Activated CD8-positive, alpha-beta T cell treated with anti-CD3 and anti-CD28 coated beads for 36 hours (primary cell): ENCODE measurements at regions of chr2 and their contacts with region 1.

Region 1: DNA sequence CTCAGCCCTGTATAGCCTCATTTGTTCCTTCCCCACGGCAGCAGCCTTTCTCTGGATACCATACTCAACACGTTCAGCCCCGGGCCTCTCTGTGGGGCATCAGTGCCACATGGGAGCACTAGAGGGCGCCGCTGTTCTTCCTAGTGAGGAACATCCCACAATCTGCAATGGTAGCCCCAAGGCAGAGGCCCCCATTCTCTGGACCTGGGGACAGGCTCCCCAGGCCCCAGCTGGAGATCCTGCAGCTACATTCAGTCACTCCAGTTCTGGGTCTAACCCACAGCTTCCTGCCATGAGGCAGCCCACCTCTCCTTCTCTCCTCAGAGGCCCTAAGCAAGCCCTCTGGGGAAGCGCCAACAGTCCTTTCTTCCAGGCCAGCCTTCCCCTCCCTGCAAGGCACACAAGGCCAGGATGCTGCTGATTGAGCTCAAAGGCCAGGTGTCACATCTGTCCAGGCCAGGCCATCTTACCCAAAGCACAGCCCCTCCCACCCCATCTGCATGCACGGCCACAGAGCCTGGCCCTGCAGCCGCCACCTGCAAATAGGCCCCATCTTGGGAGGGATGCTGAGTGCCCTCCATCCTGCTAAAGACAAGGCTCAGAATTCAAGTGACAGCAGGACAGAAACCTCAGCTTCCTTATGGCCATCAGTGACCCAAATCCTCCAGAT is 14.3 kb upstream of the SFXN5 start:
- DNase-seq: peak; percentile 93
- ATAC-seq: peak; percentile 99
- H3K4me3 Mint-ChIP-seq: no peak overlapping the region
- H3K27ac Mint-ChIP-seq: no peak overlapping the region
- H3K4me1 Mint-ChIP-seq: no peaks in the 10 kb centered on the region
- H3K27me3 Mint-ChIP-seq: no peaks in the 10 kb centered on the region
- CTCF ChIP-seq: peak; percentile 92

Region 2: GRCh38 chr2:72993147-72993932 is 92.5 kb before region 1 on chr2:
- CTCF ChIA-PET with region 1: interaction called, 11 read pairs
- POLR2A ChIA-PET with region 1: no interaction called
- intact Hi-C with region 1: no loop called
- DNase-seq: peak; percentile 51
- ATAC-seq: peak; percentile 79
- H3K4me3 Mint-ChIP-seq: no peak overlapping the region
- H3K27ac Mint-ChIP-seq: no peak overlapping the region
- H3K4me1 Mint-ChIP-seq: no peaks in the 10 kb centered on the region
- H3K27me3 Mint-ChIP-seq: no peaks in the 10 kb centered on the region
- CTCF ChIP-seq: peak; percentile 81

Region 3: DNA sequence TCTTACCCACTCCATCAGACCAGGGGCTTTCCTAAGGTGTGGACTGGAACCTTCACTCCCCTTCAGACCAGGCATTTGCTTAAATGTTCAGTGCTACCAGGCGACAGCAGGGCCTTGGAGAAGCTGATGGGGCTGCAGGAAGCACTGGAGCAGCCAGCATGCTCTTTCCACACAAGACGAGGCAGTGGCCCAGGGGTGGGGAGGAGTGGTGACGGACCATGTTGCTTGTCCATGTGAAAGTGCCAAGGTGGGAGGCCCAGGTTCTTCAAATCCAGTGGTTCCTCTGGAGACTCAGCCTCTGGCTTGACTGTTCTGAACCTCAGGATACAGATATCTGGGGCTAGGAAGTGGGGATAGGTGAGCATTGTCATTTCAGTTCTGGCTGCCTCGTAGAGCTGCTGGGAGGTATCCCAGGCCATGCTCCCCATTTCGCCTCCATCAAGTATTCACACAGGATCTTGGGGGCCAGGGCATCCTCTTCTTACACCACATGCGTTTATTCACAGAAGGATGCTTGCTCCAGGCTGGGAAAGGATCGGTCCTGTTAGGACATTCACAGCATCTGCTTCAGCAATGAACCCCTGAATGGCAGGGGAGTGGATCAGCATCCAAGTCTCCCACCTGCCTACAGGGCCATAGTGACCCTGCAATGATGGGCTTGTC is 76.5 kb before region 1 on chr2:
- CTCF ChIA-PET with region 1: no interaction called
- POLR2A ChIA-PET with region 1: no interaction called
- intact Hi-C with region 1: no loop called
- DNase-seq: no peak
- ATAC-seq: no peak
- H3K4me3 Mint-ChIP-seq: no peak overlapping the region
- H3K27ac Mint-ChIP-seq: no peak overlapping the region
- H3K4me1 Mint-ChIP-seq: no peaks in the 10 kb centered on the region
- H3K27me3 Mint-ChIP-seq: no peaks in the 10 kb centered on the region
- CTCF ChIP-seq: no peak

Region 4: GRCh38 chr2:73071360-73072133 is 14.3 kb before region 1 on chr2 and contains the start of gene SFXN5:
- CTCF ChIA-PET with region 1: interaction called, 20 read pairs
- POLR2A ChIA-PET with region 1: interaction called, 3 read pairs
- intact Hi-C with region 1: no loop called
- DNase-seq: peak; percentile 97
- ATAC-seq: peak; percentile 90
- H3K4me3 Mint-ChIP-seq: peak within 1 kb of the TSS; percentile 82
- H3K27ac Mint-ChIP-seq: peak within 1 kb of the TSS; percentile 94
- H3K4me1 Mint-ChIP-seq: peaks cover 25% of the 10 kb centered on the region
- H3K27me3 Mint-ChIP-seq: no peaks in the 10 kb centered on the region
- CTCF ChIP-seq: no peak
- total RNA-seq, gene SFXN5: 7.4 to 9.6 TPM

Region 5: GRCh38 chr2:73112913-73113633 is 27.2 kb after region 1 on chr2 and contains the start of gene RAB11FIP5:
- CTCF ChIA-PET with region 1: interaction called, 16 read pairs
- POLR2A ChIA-PET with region 1: interaction called, 3 read pairs
- intact Hi-C with region 1: no loop called
- DNase-seq: peak; percentile 75
- ATAC-seq: peak; percentile 83
- H3K4me3 Mint-ChIP-seq: peak within 1 kb of the TSS; percentile 81
- H3K27ac Mint-ChIP-seq: peak within 1 kb of the TSS; percentile 68
- H3K4me1 Mint-ChIP-seq: peaks cover 18% of the 10 kb centered on the region
- H3K27me3 Mint-ChIP-seq: peaks cover 7% of the 10 kb centered on the region
- CTCF ChIP-seq: no peak
- total RNA-seq, gene RAB11FIP5: 9.0 to 9.7 TPM

Region 6: GRCh38 chr2:73156539-73157124 is 70.8 kb after region 1 on chr2:
- CTCF ChIA-PET with region 1: interaction called, 90 read pairs
- POLR2A ChIA-PET with region 1: no interaction called
- intact Hi-C with region 1: no loop called
- DNase-seq: peak; percentile 68
- ATAC-seq: peak; percentile 91
- H3K4me3 Mint-ChIP-seq: no peak overlapping the region
- H3K27ac Mint-ChIP-seq: no peak overlapping the region
- H3K4me1 Mint-ChIP-seq: no peaks in the 10 kb centered on the region
- H3K27me3 Mint-ChIP-seq: peaks cover 24% of the 10 kb centered on the region
- CTCF ChIP-seq: peak; percentile 74

Region 7: DNA sequence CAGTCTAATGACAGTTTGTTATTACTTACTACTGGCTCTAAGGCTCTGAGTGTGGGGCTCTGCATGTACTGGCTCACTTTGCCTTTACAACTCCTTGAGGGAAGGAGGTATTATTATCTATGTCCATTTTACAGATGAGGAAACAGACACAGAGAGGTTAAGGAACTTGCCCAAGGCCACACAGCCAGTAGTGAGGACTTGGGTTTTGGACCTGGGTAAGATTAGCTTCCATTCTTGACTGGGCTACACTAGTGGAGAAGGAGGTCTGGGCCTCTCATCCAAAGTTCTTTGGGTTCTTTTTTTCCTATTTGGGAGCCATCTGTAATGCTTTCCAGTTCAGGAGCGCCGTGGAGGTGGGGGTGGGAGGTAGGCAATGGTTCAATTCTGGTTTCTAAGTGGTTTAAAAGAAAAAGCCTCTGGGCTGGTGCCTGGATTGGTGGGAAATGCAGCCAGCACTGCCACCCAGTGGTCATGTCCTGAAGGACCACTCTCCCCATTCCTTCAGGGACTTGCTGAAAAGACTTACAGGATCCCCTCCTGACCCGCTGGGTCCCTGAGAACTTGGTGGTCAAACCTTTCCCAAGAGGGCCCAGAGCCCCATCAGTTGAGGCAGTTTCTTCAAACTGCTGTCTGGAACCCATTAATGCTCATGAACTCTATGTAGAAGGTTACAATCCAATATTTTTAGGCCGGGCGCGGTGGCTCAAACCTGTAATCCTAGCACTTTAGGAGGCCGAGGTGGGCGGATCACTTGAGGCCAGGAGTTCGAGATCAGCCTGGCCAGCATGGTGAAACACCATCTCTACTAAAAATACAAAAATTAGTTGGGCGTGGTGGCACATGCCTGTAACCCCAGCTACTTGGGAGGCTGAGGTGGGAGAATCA is 77.9 kb after region 1 on chr2:
- CTCF ChIA-PET with region 1: interaction called, 17 read pairs
- POLR2A ChIA-PET with region 1: no interaction called
- intact Hi-C with region 1: loop called (anchors 2 kb)
- DNase-seq: peak; percentile 77
- ATAC-seq: peak; percentile 94
- H3K4me3 Mint-ChIP-seq: no peak overlapping the region
- H3K27ac Mint-ChIP-seq: no peak overlapping the region
- H3K4me1 Mint-ChIP-seq: no peaks in the 10 kb centered on the region
- H3K27me3 Mint-ChIP-seq: peaks cover 1% of the 10 kb centered on the region
- CTCF ChIP-seq: peak; percentile 82

Region 8: DNA sequence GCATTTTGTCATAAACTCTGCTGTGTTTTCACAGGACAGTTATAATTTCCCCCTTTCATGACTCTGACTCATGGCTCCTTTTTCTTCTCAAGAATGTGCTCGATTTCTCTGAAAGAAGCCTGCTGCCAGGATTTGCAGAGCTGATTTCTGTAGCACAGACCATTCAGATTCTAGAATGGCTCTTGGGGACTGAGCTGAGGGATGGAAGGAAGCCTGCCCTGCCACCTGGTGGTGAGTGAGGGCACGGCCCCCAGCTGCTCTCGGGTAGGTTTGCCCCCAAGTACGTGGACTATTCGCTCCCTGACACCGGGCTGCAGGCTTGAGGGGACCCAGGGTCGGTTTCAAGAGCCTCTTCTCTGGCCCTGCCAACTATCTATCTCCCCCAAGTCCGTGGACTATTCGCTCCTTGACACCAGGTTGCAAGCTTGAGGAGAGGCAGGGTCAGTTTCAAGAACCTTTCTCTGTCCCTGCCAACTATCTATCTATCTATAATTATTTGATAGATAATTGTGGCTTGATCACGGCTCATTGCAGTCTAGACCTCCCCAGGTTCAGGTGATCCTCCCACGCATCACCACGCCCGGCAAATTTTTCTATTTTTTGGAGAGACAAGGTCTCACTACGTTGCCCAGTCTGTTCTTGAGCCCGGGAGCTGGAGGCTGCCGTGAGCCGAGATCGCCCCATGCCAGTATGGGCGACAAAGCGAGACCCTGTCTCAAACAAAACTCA is 126.8 kb after region 1 on chr2:
- CTCF ChIA-PET with region 1: interaction called, 20 read pairs
- POLR2A ChIA-PET with region 1: no interaction called
- intact Hi-C with region 1: no loop called
- DNase-seq: peak; percentile 89
- ATAC-seq: peak; percentile 78
- H3K4me3 Mint-ChIP-seq: peak overlapping the region; percentile 33
- H3K27ac Mint-ChIP-seq: no peak overlapping the region
- H3K4me1 Mint-ChIP-seq: peaks cover 29% of the 10 kb centered on the region
- H3K27me3 Mint-ChIP-seq: no peaks in the 10 kb centered on the region
- CTCF ChIP-seq: peak; percentile 90